T-cell (primary cell): ENCODE measurements at regions of chr11 and their contacts with region 1.

Region 1: GRCh38 chr11:14764579-14765527 is 121.2 kb downstream of the PDE3B start:
- DNase-seq: peak in 26 of 35 experiments; percentile 8 to 94 (median 40)
- ATAC-seq: peak; percentile 92 to 96 (median 94)
- H3K4me3 ChIP-seq: no peak overlapping the region
- H3K4me3 Mint-ChIP-seq: peak overlapping the region in 1 of 3 donors; percentile 61
- H3K27ac ChIP-seq: peak overlapping the region; percentile 84
- H3K27ac Mint-ChIP-seq: no peak overlapping the region
- H3K4me1 ChIP-seq: peaks cover 9 to 77% of the 10 kb centered on the region in 2 experiments
- H3K4me1 Mint-ChIP-seq: peaks cover 36 to 48% (median 45%) of the 10 kb centered on the region in 3 donors
- H3K27me3 ChIP-seq: no peaks in the 10 kb centered on the region
- H3K27me3 Mint-ChIP-seq: no peaks in the 10 kb centered on the region

Region 2: GRCh38 chr11:14499554-14500180 is 265.2 kb before region 1 on chr11 and contains the start of gene COPB1:
- CTCF ChIA-PET with region 1: interaction called in 1 of 2 experiments, 3 read pairs
- POLR2A ChIA-PET with region 1: interaction called in 1 of 2 experiments, 19 read pairs
- DNase-seq: peak; percentile 74 to 96 (median 92)
- ATAC-seq: peak; percentile 93 to 95 (median 94)
- H3K4me3 ChIP-seq: peak within 1 kb of the TSS; percentile 77 to 91
- H3K4me3 Mint-ChIP-seq: peak within 1 kb of the TSS; percentile 87 to 98 (median 98)
- H3K27ac ChIP-seq: peak within 1 kb of the TSS; percentile 63
- H3K27ac Mint-ChIP-seq: peak within 1 kb of the TSS; percentile 98
- H3K4me1 ChIP-seq: peaks cover 3 to 11% of the 10 kb centered on the region in 2 experiments
- H3K4me1 Mint-ChIP-seq: peaks cover 48 to 58% (median 49%) of the 10 kb centered on the region in 3 donors
- H3K27me3 ChIP-seq: no peaks in the 10 kb centered on the region
- H3K27me3 Mint-ChIP-seq: no peaks in the 10 kb centered on the region
- total RNA-seq, gene COPB1: 65.1 to 80.8 (median 78.1) TPM

Region 3: GRCh38 chr11:14578541-14578956 is 186.3 kb before region 1 on chr11:
- CTCF ChIA-PET with region 1: interaction called in 1 of 2 experiments, 23 read pairs
- POLR2A ChIA-PET with region 1: interaction called in 1 of 2 experiments, 20 read pairs
- DNase-seq: peak; percentile 26 to 96 (median 70)
- ATAC-seq: peak; percentile 98 to 99 (median 98)
- H3K4me3 ChIP-seq: no peak overlapping the region
- H3K4me3 Mint-ChIP-seq: peak overlapping the region; percentile 45 to 63 (median 50)
- H3K27ac ChIP-seq: peak overlapping the region; percentile 91
- H3K27ac Mint-ChIP-seq: peak overlapping the region; percentile 88 to 93
- H3K4me1 ChIP-seq: peaks cover 22 to 35% of the 10 kb centered on the region in 2 experiments
- H3K4me1 Mint-ChIP-seq: peaks cover 60 to 71% (median 68%) of the 10 kb centered on the region in 3 donors
- H3K27me3 ChIP-seq: no peaks in the 10 kb centered on the region
- H3K27me3 Mint-ChIP-seq: no peaks in the 10 kb centered on the region

Region 4: GRCh38 chr11:14643697-14644225 is 121.1 kb before region 1 on chr11 and contains the start of gene PDE3B:
- CTCF ChIA-PET with region 1: interaction called in 1 of 2 experiments, 15 read pairs
- POLR2A ChIA-PET with region 1: interaction called, 9 to 12 read pairs
- DNase-seq: peak; percentile 42 to 79 (median 66)
- ATAC-seq: peak; percentile 65 to 74 (median 72)
- H3K4me3 ChIP-seq: peak within 1 kb of the TSS; percentile 97 to 100
- H3K4me3 Mint-ChIP-seq: peak within 1 kb of the TSS; percentile 85 to 87 (median 86)
- H3K27ac ChIP-seq: peak within 1 kb of the TSS; percentile 80
- H3K27ac Mint-ChIP-seq: peak within 1 kb of the TSS; percentile 86 to 87
- H3K4me1 ChIP-seq: peaks cover 11 to 44% of the 10 kb centered on the region in 2 experiments
- H3K4me1 Mint-ChIP-seq: peaks cover 49 to 58% (median 54%) of the 10 kb centered on the region in 3 donors
- H3K27me3 ChIP-seq: no peaks in the 10 kb centered on the region
- H3K27me3 Mint-ChIP-seq: no peaks in the 10 kb centered on the region
- total RNA-seq, gene PDE3B: 130 to 162 (median 143) TPM

Region 5: DNA sequence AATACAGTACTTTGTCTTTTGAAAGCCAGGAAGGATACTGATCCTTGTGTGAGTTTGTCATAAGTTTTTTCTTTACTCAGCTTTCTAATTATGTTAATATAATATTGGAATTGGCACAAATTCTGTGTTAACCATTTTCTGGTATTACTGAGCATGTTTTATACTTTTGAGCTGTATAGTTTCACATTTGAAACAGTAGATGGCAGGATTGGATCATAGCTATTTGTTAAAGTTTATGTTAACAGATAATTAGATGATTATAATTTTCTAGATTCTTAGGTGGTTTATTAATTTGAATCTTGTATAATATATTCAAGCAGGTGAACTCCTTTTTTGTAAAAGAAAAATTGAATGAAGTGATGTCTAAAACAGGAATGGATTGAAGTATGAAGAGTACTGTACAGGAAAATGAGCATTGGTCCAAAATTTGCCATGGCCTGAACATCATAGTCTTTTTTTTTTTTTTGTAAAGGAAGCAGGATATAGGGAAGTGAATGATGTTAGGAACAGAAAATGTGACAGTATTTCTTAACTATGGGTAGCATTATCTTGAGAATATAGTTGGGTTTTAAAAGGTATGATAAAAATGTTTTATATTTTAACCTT is 25.1 kb after region 1 on chr11:
- CTCF ChIA-PET with region 1: interaction called in 1 of 2 experiments, 12 read pairs
- POLR2A ChIA-PET with region 1: interaction called in 1 of 2 experiments, 3 read pairs
- DNase-seq: peak in 1 of 35 experiments; percentile 49
- ATAC-seq: peak in 1 of 4 experiments; percentile 59
- H3K4me3 ChIP-seq: no peak overlapping the region
- H3K4me3 Mint-ChIP-seq: no peak overlapping the region
- H3K27ac ChIP-seq: no peak overlapping the region
- H3K27ac Mint-ChIP-seq: peak overlapping the region in 1 of 2 donors; percentile 47
- H3K4me1 ChIP-seq: no peaks in the 10 kb centered on the region
- H3K4me1 Mint-ChIP-seq: peaks cover 5 to 40% (median 21%) of the 10 kb centered on the region in 3 donors
- H3K27me3 ChIP-seq: no peaks in the 10 kb centered on the region
- H3K27me3 Mint-ChIP-seq: no peaks in the 10 kb centered on the region